HCT116 (cell line): ENCODE measurements at regions of chr4 and their contacts with region 1.

Region 1: GRCh38 chr4:88378691-88379559 is at the start of gene HERC6:
- DNase-seq: peak; percentile 70
- ATAC-seq: peak; percentile 97
- H3K4me3 ChIP-seq: peak within 1 kb of the TSS; percentile 79 to 94
- H3K27ac ChIP-seq: peak within 1 kb of the TSS; percentile 70
- H3K4me1 ChIP-seq: peaks cover 0 to 5% of the 10 kb centered on the region in 2 experiments; a peak in 1 of 4 replicates
- H3K27me3 ChIP-seq: no peaks in the 10 kb centered on the region
- CTCF ChIP-seq: peak; percentile 51 to 68 (median 65); a peak in 5 of 6 replicates
- POLR2A ChIP-seq: no peak
- RAD21 ChIP-seq: peak; percentile 50
- total RNA-seq, gene HERC6: 4.9 TPM

Region 2: GRCh38 chr4:88415982-88416381 is 37.1 kb after region 1 on chr4:
- CTCF ChIA-PET with region 1: no interaction called
- POLR2A ChIA-PET with region 1: no interaction called
- RAD21 ChIA-PET with region 1: no interaction called
- intact Hi-C with region 1: loop called (anchors 2 kb)
- DNase-seq: no peak
- ATAC-seq: no peak
- H3K4me3 ChIP-seq: no peak overlapping the region
- H3K27ac ChIP-seq: no peak overlapping the region
- H3K4me1 ChIP-seq: no peaks in the 10 kb centered on the region
- H3K27me3 ChIP-seq: no peaks in the 10 kb centered on the region
- CTCF ChIP-seq: no peak
- POLR2A ChIP-seq: no peak
- RAD21 ChIP-seq: no peak